ENCODE measurements at regions of chr4 and their contacts with region 1.

Region 1: GRCh38 chr4:77827343-77827742 is 8.2 kb upstream of the CNOT6L start:
- DNase-seq: peak; percentile 91
- H3K4me3 ChIP-seq: peak overlapping the region; percentile 57
- H3K27ac ChIP-seq: peak overlapping the region; percentile 94
- H3K4me1 ChIP-seq: peaks cover 81% of the 10 kb centered on the region
- CTCF ChIP-seq: no peak

Region 2: DNA sequence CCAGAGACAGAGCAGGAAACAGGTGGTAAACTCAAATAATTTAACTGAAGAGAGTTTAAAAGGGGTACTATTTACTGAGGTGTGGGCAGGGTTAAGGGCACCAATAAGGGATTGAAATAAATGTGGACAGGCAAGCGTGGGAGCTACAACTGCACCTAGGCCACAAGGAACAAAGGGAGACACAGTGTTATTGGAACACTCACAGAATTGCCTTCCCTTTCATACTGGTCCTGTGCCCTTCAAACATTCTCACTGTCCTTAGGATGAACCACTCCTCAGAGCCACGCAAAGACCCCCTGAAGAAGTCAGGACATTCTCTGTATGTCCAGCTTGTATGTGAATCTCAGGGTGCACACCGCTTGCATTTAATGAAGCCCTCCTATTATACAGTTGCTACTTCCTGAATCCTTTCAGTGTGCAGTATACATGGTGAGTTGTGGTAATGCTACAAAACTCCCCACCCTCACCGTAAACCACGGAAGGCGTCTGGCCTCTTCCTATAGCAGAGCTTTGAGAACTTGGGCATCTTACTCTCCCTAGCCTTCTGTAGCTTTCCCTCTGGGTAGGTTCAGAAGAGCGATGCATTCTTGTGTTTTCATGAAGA is 25.7 kb after region 1 on chr4:
- CTCF ChIA-PET with region 1: no interaction called
- POLR2A ChIA-PET with region 1: interaction called, 11 read pairs
- intact Hi-C with region 1: no loop called
- DNase-seq: peak; percentile 48
- H3K4me3 ChIP-seq: no peak overlapping the region
- H3K27ac ChIP-seq: no peak overlapping the region
- H3K4me1 ChIP-seq: peaks cover 26% of the 10 kb centered on the region
- CTCF ChIP-seq: no peak

Region 3: DNA sequence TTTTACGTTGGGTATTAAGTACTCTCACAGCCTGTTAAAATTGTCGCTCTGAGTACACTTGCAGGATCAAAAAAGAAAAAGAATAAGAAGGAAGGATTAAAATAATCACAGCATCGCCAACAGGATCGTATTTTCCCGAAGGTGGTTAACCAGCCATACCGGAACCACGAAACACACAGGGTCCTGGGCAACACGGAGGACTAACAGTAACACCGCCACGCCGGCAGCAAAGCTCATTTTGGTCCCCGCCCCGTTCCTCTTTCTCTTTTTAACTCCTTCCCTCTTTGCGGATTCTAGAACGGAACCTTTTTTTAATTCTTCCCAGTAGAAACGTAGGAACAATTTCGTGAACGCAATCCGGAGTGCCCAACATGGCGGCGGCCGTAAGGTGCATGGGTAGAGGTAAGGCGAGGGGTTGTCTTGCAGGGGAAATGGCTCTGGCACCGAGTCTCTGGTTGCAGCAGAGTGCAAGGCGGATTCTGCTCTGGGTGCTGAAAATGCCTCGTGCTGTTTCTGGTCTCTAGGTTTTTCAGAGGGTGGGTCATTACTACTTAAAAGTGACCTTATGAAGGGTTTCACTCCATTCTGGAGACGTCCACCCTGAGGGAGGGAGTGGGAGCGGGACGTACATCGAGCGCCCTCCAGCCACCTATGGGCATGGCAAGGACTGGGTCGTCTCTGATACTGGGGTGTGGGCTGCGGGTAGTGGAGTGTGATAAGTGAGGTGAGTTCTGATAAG is 35.3 kb after region 1 on chr4 and contains the start of gene MRPL1:
- CTCF ChIA-PET with region 1: no interaction called
- POLR2A ChIA-PET with region 1: interaction called, 35 read pairs
- intact Hi-C with region 1: loop called (anchors 1 kb)
- DNase-seq: peak; percentile 96
- H3K4me3 ChIP-seq: peak within 1 kb of the TSS; percentile 73
- H3K27ac ChIP-seq: peak within 1 kb of the TSS; percentile 94
- H3K4me1 ChIP-seq: peaks cover 27% of the 10 kb centered on the region
- CTCF ChIP-seq: peak; percentile 62
- total RNA-seq, gene MRPL1: 16.6 and 22.6 TPM in 2 replicates